Posterior cingulate gyrus (tissue), 11 donors: ENCODE measurements at regions of chr11 and their contacts with region 1.

Region 1: DNA sequence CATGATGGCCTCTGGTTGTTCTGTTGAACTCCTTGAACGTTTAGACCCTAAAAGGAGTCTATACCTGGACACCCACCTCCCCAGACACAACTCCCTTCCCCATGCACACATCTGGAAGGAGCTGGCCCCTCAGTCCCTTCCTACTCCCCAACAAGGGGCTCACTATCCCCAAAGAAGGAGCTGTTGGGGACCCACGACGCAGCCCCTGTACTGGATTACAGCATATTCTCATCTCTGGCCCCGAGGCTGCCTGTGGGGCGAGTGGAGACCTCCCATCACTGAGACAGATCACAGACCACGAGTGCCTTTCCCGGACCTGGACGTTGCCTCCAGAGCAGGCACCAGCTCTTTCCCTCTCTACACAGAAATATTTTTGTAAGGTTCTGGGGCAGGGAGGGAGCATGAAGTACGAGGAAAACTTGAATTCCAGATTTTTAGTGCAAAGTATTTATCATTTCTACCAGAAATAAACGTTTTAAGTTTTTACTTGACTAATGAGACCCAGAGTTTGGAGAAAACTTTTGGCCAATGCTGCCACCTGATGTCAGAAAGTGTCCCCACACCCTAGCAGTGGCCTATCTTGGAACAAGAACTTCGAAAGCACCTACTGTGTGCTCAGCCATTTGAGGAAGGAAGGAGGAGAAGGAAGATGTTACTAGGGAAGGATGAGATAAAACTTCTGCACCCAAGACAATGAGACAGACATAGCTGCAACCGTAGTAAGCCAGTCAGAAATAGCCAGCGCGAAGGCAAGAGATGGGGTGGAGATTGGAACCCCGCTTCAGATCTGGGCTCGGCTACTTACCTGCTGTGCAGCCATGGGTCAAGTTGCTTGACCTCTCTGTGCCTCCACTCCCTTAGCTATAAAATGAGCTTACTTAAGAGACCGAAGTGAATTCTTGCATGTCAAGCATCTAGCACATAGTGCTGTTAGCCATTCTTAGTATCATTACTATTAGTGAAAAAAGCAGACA is 10.2 kb upstream of the POU2F3 start:
- DNase-seq: peak in 6 of 10 donors; percentile 44 to 76 (median 59)

Region 2: GRCh38 chr11:119759324-119759723 is 470.4 kb before region 1 on chr11:
- intact Hi-C with region 1: no loop called
- DNase-seq: peak in 2 of 10 donors; percentile 75 to 76

Region 3: DNA sequence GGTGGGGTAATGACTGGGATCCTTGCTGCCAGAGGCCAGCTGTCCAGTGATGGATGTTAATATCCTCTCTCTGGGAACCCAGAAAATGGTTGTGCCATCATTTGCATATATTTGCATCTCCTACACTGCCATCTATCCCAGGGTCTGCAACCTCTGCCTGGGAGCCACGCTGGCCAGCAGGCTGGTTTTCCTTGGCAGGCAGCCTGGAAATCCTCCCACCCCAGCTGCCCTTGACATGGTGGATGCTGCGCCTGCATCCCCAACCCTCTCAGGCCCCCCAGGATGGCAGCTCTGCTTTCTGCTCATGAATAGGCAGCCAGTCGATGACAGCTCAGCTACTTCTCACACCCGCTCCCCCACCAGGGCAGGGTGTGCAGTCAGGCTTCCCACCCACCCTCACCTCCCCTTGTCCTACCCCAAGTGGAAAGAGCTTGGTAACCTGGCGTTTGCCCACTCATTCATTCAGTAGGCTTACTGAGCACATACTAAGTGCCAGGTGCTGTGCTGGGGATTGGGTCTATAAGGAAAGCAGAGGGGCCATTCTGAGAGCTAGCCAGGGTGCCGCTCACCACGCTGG is 294.3 kb before region 1 on chr11:
- intact Hi-C with region 1: no loop called
- DNase-seq: peak in 6 of 10 donors; percentile 36 to 93 (median 46)

Region 4: DNA sequence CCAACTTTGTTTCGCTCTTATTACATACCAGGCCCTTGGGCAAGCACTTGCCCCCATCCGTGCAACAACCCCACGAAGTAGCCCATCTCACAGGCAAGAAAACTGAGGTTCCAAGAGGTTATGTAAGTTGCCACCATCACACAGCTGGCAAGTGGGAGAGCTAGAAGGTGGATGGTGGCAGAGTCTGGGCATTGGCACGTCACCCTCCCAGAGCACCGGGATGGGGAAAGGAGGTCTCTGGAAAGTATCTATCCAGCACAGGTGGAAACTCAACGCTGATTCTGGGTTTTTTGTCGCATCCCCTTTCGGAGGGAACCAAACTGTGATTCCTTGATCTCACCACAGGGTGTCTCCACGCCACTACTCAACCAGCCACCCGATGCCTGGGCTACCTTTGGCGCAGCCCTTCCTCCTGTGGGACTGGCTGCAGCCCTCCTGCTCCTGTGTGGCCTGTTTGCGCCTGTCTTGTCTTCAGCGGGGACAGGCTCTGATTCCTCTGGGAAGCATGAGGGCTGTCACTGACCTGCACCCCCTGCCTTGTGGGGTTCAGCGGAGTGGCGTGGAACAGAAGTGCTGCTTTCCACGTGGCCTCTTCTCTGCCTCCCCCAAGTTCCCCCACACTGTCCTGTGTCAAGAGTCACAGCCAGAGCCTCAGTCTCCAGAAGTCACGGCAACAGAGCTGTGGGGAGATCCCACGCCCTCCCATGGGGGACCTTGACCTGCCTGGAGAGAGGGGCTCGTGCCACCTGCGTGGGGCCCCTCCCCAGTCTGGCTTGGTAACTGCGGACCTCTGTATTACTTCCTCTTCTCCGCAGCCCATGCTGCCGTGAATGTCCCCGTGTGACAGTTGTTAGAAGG is 57.5 kb before region 1 on chr11:
- intact Hi-C with region 1: loop called (anchors 1 kb)
- DNase-seq: peak in 9 of 10 donors; percentile 63 to 96 (median 71)

Region 5: DNA sequence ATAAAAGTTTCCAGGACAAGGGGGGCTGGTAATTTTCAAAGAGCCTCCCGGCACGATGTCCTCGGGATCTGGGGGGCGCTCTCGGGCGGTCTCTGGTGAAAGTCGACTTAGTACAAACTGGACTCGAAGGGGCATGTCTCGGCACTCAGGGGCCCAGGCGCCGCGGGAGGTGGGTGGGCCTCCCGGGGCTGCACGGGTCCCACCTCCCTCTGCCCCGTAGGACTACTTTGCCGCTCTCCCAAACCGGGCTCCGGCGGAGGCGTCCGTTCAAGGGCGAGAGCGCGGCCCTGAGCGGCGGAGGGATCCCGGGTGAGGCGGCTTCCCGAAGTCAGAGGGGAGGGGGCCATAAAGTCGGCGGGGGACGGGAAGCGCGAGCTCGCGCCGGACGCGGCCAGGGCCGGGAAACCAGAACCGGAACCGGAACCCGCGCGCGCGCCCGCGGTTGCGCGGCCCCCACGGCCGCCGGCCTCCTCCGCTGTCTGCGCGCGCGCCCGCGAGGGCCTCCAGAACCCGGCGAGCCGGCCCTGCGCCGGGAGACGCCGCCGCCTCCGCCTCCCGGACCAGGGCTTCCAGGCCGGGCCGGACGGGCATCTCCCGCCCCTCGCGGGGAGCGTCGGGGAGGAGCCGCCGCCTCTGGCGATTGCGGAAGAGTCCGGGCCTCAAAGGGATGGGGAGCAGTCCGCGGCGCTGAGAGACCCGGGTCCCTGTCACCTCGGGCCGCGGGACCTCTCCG is 106.3 kb after region 1 on chr11 and contains the start of gene ARHGEF12:
- intact Hi-C with region 1: no loop called
- DNase-seq: peak; percentile 87 to 98 (median 91)